MCF 10A (cell line): ENCODE measurements at regions of chr11 and their contacts with region 1.

Region 1: DNA sequence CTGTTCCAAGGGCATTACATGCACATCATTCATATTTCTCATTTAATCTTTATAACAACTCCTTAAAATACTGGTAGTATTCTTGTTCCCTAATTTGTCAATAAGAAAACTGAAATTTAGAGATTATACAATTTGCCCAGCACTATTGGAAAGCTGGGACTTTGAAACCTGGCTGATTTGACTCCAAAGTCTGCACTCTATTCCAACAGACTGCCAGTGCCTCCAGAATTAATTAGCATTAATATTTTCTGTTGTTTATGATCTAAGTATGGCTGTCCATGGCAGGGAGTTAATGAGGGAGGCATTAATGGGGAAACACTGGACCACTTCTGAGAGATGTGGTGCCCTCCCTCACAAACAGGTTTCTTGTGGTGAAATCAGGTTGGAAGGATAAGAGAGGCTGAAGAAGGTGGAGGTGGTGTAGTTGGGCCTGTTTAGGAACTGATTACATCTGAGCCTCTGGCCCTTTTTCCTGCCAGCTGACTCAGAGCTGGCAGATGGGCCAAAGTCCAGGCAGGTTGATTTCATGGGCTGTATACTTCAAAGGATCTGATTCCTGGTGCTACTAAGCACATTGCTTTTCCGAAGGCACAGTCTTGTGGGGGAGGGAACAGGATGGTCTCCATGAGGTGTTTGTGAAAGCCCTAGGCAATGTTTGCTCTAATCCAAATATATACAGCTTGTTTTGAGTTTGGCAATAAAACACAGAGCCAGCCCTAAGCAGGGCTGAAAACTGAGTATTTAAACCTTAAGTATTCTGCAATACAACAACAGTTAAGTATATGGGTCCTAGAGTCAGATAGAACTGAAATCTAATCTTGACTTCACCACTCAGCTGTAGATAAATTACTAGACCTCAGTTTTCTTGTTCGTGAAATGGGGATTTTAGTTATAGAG is 21.0 kb upstream of the RAB30 start:
- DNase-seq: peak; percentile 64
- H3K4me3 Mint-ChIP-seq: no peak overlapping the region
- H3K27ac Mint-ChIP-seq: peak overlapping the region; percentile 84
- H3K4me1 Mint-ChIP-seq: peaks cover 9% of the 10 kb centered on the region
- H3K27me3 Mint-ChIP-seq: no peaks in the 10 kb centered on the region
- CTCF ChIP-seq: no peak

Region 2: GRCh38 chr11:82718307-82718706 is 374.4 kb before region 1 on chr11:
- CTCF ChIA-PET with region 1: no interaction called
- POLR2A ChIA-PET with region 1: no interaction called
- intact Hi-C with region 1: no loop called
- DNase-seq: peak; percentile 58
- H3K4me3 Mint-ChIP-seq: no peak overlapping the region
- H3K27ac Mint-ChIP-seq: no peak overlapping the region
- H3K4me1 Mint-ChIP-seq: no peaks in the 10 kb centered on the region
- H3K27me3 Mint-ChIP-seq: no peaks in the 10 kb centered on the region
- CTCF ChIP-seq: peak; percentile 60

Region 3: DNA sequence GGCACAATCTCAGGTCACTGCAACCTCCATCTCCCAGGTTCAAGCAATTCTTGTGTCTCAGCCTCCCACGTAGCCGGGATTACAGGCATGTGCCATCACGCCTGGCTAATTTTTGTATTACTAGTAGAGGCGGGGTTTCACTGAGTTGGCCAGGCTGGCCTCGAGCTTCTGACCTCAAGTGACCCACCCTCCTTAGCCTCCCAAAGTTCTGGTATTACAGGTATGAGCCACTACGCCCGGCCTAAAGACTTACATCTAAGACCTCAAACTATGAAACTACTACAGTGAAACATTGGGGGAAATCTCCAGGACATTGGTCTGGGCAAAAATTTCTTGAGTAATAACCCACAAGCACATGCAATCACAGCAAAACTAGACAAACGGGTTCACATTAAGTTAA is 345.3 kb before region 1 on chr11:
- CTCF ChIA-PET with region 1: no interaction called
- POLR2A ChIA-PET with region 1: no interaction called
- intact Hi-C with region 1: no loop called
- DNase-seq: peak; percentile 5
- H3K4me3 Mint-ChIP-seq: no peak overlapping the region
- H3K27ac Mint-ChIP-seq: no peak overlapping the region
- H3K4me1 Mint-ChIP-seq: no peaks in the 10 kb centered on the region
- H3K27me3 Mint-ChIP-seq: peaks cover 2% of the 10 kb centered on the region
- CTCF ChIP-seq: no peak

Region 4: GRCh38 chr11:82906244-82906654 is 186.5 kb before region 1 on chr11:
- CTCF ChIA-PET with region 1: interaction called, 5 read pairs
- POLR2A ChIA-PET with region 1: interaction called, 6 read pairs
- intact Hi-C with region 1: loop called (anchors 5 kb)
- DNase-seq: peak; percentile 40
- H3K4me3 Mint-ChIP-seq: peak overlapping the region; percentile 37
- H3K27ac Mint-ChIP-seq: peak overlapping the region; percentile 40
- H3K4me1 Mint-ChIP-seq: peaks cover 34% of the 10 kb centered on the region
- H3K27me3 Mint-ChIP-seq: no peaks in the 10 kb centered on the region
- CTCF ChIP-seq: peak; percentile 46

Region 5: GRCh38 chr11:83389975-83390374 is 297.2 kb after region 1 on chr11:
- CTCF ChIA-PET with region 1: no interaction called
- POLR2A ChIA-PET with region 1: no interaction called
- intact Hi-C with region 1: no loop called
- DNase-seq: no peak
- H3K4me3 Mint-ChIP-seq: no peak overlapping the region
- H3K27ac Mint-ChIP-seq: no peak overlapping the region
- H3K4me1 Mint-ChIP-seq: no peaks in the 10 kb centered on the region
- H3K27me3 Mint-ChIP-seq: no peaks in the 10 kb centered on the region
- CTCF ChIP-seq: no peak